ENCODE measurements at regions of chr22 and their contacts with region 1.

Region 1: GRCh38 chr22:36454916-36455570 is 26.4 kb downstream of the TXN2 start:
- DNase-seq: peak; percentile 98
- ATAC-seq: peak; percentile 75
- H3K4me3 Mint-ChIP-seq: peak overlapping the region; percentile 73
- H3K27ac Mint-ChIP-seq: peak overlapping the region; percentile 83
- H3K4me1 Mint-ChIP-seq: peaks cover 38% of the 10 kb centered on the region
- H3K27me3 Mint-ChIP-seq: no peaks in the 10 kb centered on the region
- CTCF ChIP-seq: no peak

Region 2: GRCh38 chr22:36194971-36195370 is 260.1 kb before region 1 on chr22:
- CTCF ChIA-PET with region 1: no interaction called
- POLR2A ChIA-PET with region 1: no interaction called
- intact Hi-C with region 1: no loop called
- DNase-seq: peak; percentile 70
- ATAC-seq: peak; percentile 65
- H3K4me3 Mint-ChIP-seq: no peak overlapping the region
- H3K27ac Mint-ChIP-seq: no peak overlapping the region
- H3K4me1 Mint-ChIP-seq: peaks cover 27% of the 10 kb centered on the region
- H3K27me3 Mint-ChIP-seq: no peaks in the 10 kb centered on the region
- CTCF ChIP-seq: peak; percentile 76

Region 3: DNA sequence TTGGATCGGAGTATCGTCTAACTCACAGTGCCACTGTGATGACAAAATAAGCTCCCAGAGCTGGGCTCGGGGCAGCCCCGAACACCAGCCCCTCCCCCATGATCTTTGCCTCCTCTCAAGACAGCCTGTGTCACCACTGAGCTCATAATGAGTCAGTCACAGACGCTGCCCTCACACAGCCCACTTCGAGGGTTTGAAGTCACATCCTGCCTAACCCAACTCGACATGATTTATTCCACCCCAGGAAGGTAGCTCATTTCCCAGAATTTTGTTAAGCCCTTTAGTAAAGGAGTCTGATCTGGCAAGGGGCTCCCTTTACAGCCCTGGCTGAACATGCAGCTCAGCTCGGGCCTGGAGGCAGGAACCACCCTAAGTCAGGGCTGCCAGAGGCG is 90.0 kb before region 1 on chr22:
- CTCF ChIA-PET with region 1: interaction called, 5 read pairs
- POLR2A ChIA-PET with region 1: interaction called, 4 read pairs
- intact Hi-C with region 1: loop called (anchors 5 kb)
- DNase-seq: peak; percentile 97
- ATAC-seq: peak; percentile 88
- H3K4me3 Mint-ChIP-seq: peak overlapping the region; percentile 69
- H3K27ac Mint-ChIP-seq: peak overlapping the region; percentile 98
- H3K4me1 Mint-ChIP-seq: peaks cover 93% of the 10 kb centered on the region
- H3K27me3 Mint-ChIP-seq: no peaks in the 10 kb centered on the region
- CTCF ChIP-seq: no peak

Region 4: DNA sequence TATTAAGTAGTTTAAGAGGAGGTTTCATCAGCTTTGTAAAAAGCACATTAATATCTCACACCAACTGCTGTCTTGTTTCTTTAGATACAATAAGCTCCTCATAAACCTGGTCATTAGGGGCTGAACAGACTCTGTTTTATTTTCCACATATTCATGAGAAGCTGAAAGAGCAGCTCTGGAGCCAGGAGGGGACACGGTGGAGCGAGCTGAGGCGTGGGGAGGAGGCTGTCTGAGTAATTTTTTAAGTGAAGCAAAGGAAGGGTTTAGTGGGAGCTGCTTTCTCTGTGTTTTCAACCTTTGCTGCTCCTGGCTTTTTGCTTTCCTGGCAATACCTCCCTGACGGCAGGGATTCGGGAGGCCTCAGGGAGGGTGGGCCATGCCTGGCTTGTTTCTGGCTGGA is 140.9 kb after region 1 on chr22:
- CTCF ChIA-PET with region 1: no interaction called
- POLR2A ChIA-PET with region 1: no interaction called
- intact Hi-C with region 1: no loop called
- DNase-seq: no peak
- ATAC-seq: no peak
- H3K4me3 Mint-ChIP-seq: no peak overlapping the region
- H3K27ac Mint-ChIP-seq: no peak overlapping the region
- H3K4me1 Mint-ChIP-seq: no peaks in the 10 kb centered on the region
- H3K27me3 Mint-ChIP-seq: peaks cover 5% of the 10 kb centered on the region
- CTCF ChIP-seq: no peak

Measured in activated CD8-positive, alpha-beta T cell treated with anti-CD3 and anti-CD28 coated beads for 36 hours (primary cell).